ENCODE measurements at regions of chr12 and their contacts with region 1.

Region 1: DNA sequence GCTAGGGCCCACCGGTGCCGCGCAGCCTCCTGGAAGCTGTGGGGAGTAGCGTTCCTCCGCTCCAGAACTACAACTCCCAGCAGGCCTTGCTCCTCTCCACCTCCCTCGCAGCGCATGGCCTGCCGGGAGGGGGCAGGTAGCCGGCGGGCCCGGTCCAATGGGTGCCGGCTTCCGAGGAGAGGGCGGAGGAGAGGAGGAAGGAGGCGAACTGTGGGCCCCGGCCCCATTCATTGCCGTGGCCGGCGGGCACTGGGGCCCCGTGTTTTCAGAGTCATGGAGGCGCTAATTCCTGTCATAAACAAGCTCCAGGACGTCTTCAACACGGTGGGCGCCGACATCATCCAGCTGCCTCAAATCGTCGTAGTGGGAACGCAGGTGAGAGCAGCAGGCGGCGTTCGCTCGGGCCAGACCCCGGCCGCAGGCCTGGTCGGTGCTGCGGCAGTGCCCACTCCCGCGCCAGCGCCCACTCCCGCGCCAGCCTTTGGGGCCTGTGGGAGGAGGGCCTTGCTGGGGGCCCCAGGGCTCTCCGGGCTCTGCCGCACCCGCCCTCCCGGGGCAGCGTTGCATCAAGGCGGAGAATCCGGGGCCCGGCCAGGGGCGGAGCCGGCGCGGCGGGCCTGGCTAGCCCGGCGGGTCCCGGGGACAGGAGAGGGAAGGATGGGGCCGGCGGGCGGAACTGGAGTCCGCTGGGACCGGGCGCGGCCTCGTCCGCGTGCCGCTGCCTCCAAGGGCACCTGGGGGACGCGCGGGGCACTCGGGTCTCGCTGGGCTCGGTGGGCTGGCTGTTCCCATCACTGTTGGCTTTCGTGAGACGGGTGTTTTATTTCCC is at the start of gene DNM1L:
- DNase-seq: peak; percentile 97
- ATAC-seq: peak; percentile 99
- H3K4me3 ChIP-seq: peak within 1 kb of the TSS; percentile 65 to 80
- H3K27ac ChIP-seq: peak within 1 kb of the TSS; percentile 62 to 88
- H3K4me1 ChIP-seq: no peaks in the 10 kb centered on the region
- H3K27me3 ChIP-seq: no peaks in the 10 kb centered on the region
- total RNA-seq, gene DNM1L: 68.8 to 92.5 TPM

Region 2: DNA sequence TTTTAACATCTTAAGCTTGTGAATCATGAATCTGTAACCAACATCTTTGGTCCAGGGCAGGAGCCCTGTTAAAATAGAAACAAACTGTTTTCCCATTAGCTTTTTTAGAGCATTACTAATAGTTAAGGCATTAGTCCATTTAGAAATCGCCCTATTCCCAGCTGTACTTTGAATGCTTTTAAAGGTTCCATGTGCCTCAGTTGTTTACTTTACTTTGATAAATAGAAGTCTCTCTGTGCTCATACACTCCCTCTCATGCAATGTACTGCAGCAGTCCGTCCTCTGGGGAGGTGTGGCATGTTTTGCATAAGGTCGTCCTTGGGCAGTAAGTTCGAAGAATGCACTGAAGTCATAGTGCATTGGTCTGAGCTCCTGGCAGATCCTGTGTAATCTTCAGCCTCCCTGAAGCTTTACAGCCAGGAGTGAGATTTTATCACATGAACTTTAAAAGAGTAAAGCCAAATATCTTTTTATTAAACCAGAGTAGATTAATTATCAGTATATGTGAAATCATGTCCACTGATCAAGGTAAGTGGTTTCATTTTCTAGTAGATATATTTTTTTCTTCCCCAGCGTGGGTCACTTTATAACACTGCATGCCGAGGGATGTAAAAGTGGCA is 145.2 kb before region 1 on chr12:
- intact Hi-C with region 1: loop called in 1 of 2 experiments (anchors 10 kb)
- DNase-seq: peak; percentile 73 to 81
- ATAC-seq: peak; percentile 81
- H3K4me3 ChIP-seq: peak overlapping the region; percentile 79 to 97
- H3K27ac ChIP-seq: peak overlapping the region; percentile 39 to 58
- H3K4me1 ChIP-seq: peaks cover 0 to 5% of the 10 kb centered on the region in 2 donors
- H3K27me3 ChIP-seq: no peaks in the 10 kb centered on the region

Region 3: DNA sequence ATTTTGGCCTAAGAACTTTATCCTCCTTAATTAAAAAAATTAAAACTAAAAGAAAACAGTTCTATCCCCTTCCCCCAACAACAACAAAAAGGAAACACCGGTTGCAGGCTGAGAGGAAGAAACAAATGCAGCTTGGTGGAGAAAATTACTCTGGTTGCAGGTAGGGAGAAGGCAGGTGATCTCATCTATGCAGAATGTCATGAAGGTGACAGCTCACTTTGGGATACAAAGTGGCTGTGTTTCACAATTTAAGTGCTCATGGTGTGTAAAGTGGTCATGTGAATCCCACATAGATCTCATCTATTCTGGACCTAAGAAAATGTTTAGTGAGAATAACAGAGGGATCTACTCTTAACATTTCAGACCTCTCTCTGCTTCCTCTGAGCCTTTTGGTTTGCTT is 437.0 kb after region 1 on chr12:
- intact Hi-C with region 1: no loop called
- DNase-seq: no peak
- ATAC-seq: no peak
- H3K4me3 ChIP-seq: no peak overlapping the region
- H3K27ac ChIP-seq: no peak overlapping the region
- H3K4me1 ChIP-seq: no peaks in the 10 kb centered on the region
- H3K27me3 ChIP-seq: no peaks in the 10 kb centered on the region